Calu3 (cell line): ENCODE measurements at regions of chr14 and their contacts with region 1.

Region 1: DNA sequence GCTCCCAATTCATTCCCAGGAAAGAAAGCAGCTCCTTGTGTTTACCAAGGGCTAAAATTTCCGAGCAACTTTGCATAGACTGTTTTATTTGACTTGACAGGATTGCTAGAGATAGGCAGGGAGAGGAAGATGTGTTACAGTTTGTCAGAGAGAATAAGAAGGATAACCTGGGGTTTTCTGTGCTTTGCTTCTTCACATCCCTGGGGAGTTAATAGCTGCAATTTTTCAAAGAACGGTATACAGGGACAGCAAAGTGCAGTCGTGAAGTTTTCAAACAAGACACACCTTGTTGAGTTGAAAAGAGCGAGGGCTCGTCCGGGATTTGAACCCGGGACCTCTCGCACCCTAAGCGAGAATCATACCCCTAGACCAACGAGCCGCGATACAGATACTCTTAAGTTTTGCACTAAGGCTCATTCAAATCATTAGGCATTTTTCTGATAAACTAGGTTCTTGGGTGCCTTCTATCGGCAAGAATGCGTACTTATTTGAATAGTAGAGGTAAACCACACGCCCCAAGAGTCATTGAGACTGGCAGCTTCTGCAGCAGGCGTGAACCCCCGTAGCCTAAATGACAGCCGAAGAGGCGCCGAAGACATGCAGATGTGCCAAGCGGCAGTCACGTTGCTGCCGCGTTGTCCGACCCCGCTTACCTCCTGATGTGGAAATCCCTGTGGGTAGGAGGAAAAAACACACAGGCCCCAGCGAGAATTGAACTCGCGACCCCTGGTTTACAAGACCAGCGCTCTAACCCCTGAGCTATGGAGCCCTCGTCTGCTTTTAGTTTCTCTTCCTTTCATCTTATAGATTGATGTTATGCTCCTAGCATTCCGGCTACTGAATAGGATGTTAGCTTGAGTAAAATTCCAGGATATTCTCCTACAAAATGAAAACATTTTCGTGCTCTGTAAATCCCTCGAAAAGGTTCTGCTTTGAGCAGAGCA is 22.2 kb upstream of the RNASE12 start:
- DNase-seq: peak; percentile 86
- H3K4me3 Mint-ChIP-seq: no peak overlapping the region
- H3K27ac Mint-ChIP-seq: no peak overlapping the region
- H3K4me1 Mint-ChIP-seq: peaks cover 8% of the 10 kb centered on the region
- H3K27me3 Mint-ChIP-seq: no peaks in the 10 kb centered on the region
- CTCF ChIP-seq: peak; percentile 72

Region 2: GRCh38 chr14:20327005-20327869 is 286.1 kb before region 1 on chr14:
- CTCF ChIA-PET with region 1: no interaction called
- intact Hi-C with region 1: loop called (anchors 1 kb)
- DNase-seq: peak; percentile 36
- H3K4me3 Mint-ChIP-seq: no peak overlapping the region
- H3K27ac Mint-ChIP-seq: no peak overlapping the region
- H3K4me1 Mint-ChIP-seq: peaks cover 13% of the 10 kb centered on the region
- H3K27me3 Mint-ChIP-seq: no peaks in the 10 kb centered on the region
- CTCF ChIP-seq: peak; percentile 46

Region 3: DNA sequence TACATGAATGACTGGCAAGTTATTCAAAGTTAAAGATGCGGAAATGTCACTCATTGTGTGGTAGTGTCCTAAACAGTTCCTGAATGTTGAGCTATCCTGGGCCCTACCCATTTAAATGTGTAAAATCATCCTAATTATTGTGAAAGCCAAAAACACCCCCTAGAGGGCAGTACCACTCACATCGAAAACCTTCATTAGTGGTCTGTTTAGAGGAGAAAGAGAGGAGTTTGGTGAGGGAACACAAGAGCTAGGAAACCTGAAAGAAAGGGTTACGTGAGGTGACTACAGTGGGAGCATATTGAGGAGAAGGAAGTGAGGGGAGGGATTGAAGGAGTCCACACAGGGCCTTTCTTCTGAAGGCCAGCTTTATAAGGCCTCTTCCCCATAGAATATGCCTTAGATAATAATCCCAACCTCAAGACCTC is 197.6 kb before region 1 on chr14:
- CTCF ChIA-PET with region 1: interaction called, 3 read pairs
- intact Hi-C with region 1: loop called (anchors 5 kb)
- DNase-seq: peak; percentile 55
- H3K4me3 Mint-ChIP-seq: no peak overlapping the region
- H3K27ac Mint-ChIP-seq: peak overlapping the region; percentile 18
- H3K4me1 Mint-ChIP-seq: peaks cover 36% of the 10 kb centered on the region
- H3K27me3 Mint-ChIP-seq: no peaks in the 10 kb centered on the region
- CTCF ChIP-seq: peak; percentile 30

Region 4: GRCh38 chr14:20427231-20428009 is 185.9 kb before region 1 on chr14:
- CTCF ChIA-PET with region 1: no interaction called
- intact Hi-C with region 1: no loop called
- DNase-seq: no peak
- H3K4me3 Mint-ChIP-seq: no peak overlapping the region
- H3K27ac Mint-ChIP-seq: peak overlapping the region; percentile 22
- H3K4me1 Mint-ChIP-seq: peaks cover 29% of the 10 kb centered on the region
- H3K27me3 Mint-ChIP-seq: no peaks in the 10 kb centered on the region
- CTCF ChIP-seq: no peak

Region 5: DNA sequence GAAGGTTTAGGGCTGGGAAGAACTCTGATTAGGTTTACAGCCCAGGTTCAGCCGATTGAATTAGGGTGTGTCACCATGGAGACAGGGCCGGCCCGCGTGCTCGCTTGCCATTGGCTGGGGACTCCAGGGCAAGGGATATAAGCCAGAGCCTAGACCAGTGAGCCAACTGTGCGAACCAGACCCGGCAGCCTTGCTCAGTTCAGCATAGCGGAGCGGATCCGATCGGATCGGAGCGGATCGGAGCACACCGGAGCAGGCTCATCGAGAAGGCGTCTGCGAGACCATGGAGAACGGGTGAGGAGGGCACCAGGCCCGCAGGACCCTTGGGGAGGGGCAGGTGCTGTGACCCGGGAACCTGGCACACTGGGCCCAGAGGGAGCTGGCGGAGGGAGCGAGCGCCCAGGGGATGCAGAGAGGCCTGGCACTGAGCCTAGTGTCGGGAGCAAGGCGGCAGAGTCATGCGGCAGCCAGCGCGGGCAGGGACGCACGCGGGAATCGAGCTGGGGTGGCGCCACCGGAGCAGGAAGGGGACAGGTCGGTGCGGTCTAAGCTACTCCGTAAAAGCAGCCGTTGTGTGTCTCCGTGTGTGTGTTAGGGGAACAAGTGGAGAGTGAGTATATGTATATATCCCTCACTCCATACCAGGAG is 144.0 kb before region 1 on chr14 and contains the start of gene PNP:
- CTCF ChIA-PET with region 1: no interaction called
- intact Hi-C with region 1: loop called (anchors 5 kb)
- DNase-seq: peak; percentile 91
- H3K4me3 Mint-ChIP-seq: peak within 1 kb of the TSS; percentile 97
- H3K27ac Mint-ChIP-seq: peak within 1 kb of the TSS; percentile 97
- H3K4me1 Mint-ChIP-seq: peaks cover 27% of the 10 kb centered on the region
- H3K27me3 Mint-ChIP-seq: no peaks in the 10 kb centered on the region
- CTCF ChIP-seq: no peak
- total RNA-seq, gene PNP: 81.3 and 94.9 TPM in 2 replicates

Region 6: GRCh38 chr14:20632682-20633428 is 19.5 kb after region 1 on chr14:
- CTCF ChIA-PET with region 1: interaction called, 3 read pairs
- intact Hi-C with region 1: loop called (anchors 1 kb)
- DNase-seq: peak; percentile 69
- H3K4me3 Mint-ChIP-seq: peak overlapping the region; percentile 67
- H3K27ac Mint-ChIP-seq: peak overlapping the region; percentile 95
- H3K4me1 Mint-ChIP-seq: peaks cover 18% of the 10 kb centered on the region
- H3K27me3 Mint-ChIP-seq: peaks cover 12% of the 10 kb centered on the region
- CTCF ChIP-seq: no peak

Region 7: DNA sequence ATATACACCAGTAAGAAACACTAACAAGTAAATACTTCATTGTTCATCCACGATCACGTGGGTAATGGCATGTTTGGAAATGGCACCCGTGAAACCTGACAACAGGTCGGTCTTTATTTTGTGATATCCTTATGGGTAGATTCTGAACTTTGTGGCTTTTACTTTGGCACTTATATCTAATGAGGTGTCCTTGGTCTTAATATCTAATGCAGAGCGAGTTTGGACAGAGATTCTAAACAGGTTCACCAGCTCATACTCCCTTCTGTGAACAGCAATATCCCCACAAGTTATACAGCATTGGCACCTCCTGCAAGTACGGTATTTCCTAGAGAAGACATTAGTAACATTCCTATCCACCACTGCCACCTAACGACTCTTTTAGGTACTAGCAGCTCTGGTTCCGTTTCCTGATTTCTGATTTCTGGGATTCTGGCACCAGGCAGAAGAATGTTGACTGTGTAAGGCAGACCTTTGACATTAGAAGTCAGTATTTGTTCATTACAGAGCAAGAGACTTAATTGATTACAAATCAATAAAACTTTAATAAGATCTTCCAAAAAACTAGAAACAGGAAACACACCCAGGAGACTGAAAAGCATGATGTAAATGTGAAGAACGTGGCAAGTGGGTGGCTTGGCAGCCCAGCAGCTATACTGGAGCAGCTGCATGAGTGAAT is 77.6 kb after region 1 on chr14:
- CTCF ChIA-PET with region 1: interaction called, 10 read pairs
- intact Hi-C with region 1: loop called (anchors 1 kb)
- DNase-seq: peak; percentile 54
- H3K4me3 Mint-ChIP-seq: no peak overlapping the region
- H3K27ac Mint-ChIP-seq: no peak overlapping the region
- H3K4me1 Mint-ChIP-seq: peaks cover 19% of the 10 kb centered on the region
- H3K27me3 Mint-ChIP-seq: no peaks in the 10 kb centered on the region
- CTCF ChIP-seq: peak; percentile 48